WTC11 (cell line): ENCODE measurements at regions of chr1 and their contacts with region 1.

Region 1: DNA sequence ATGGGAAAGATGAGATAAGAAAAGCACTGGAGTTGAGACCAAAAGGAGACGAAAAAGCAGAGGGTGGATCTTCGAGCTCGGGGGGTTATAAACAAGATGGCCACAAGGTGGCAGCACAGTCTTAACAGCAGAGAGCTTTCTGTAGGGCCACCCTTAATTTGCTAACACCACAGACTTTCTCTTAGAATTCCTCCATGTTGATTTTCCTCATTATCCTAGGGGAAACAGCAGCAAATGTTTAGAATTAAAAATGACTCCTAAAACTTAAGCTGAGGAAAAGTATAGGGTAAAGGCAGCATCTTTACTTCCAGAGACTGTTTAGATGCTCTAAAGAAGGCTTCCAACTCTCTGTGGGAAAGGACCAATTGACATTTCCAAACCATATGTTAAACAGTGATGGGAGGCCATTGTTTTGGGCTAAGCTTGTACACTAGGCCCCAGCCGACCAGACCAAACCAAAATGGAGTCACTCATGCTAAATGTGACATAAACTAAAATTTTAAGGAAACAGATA is 2.5 kb upstream of the APOBEC4 start:
- DNase-seq: peak; percentile 85
- ATAC-seq: peak; percentile 92
- H3K4me3 Mint-ChIP-seq: no peak overlapping the region
- H3K27ac Mint-ChIP-seq: no peak overlapping the region
- H3K4me1 Mint-ChIP-seq: peaks cover 11% of the 10 kb centered on the region
- H3K27me3 Mint-ChIP-seq: peaks cover 2% of the 10 kb centered on the region; the same call in 1 of the 2 replicates
- CTCF ChIP-seq: peak; percentile 78

Region 2: GRCh38 chr1:183515018-183515689 is 140.5 kb before region 1 on chr1:
- CTCF ChIA-PET with region 1: no interaction called
- POLR2A ChIA-PET with region 1: no interaction called
- DNase-seq: no peak
- ATAC-seq: no peak
- H3K4me3 Mint-ChIP-seq: no peak overlapping the region
- H3K27ac Mint-ChIP-seq: no peak overlapping the region; the same call in 1 of the 2 replicates
- H3K4me1 Mint-ChIP-seq: peaks cover 24% of the 10 kb centered on the region
- H3K27me3 Mint-ChIP-seq: no peaks in the 10 kb centered on the region
- CTCF ChIP-seq: no peak

Region 3: GRCh38 chr1:183567584-183567983 is 88.0 kb before region 1 on chr1:
- CTCF ChIA-PET with region 1: no interaction called
- POLR2A ChIA-PET with region 1: no interaction called
- DNase-seq: no peak
- ATAC-seq: no peak
- H3K4me3 Mint-ChIP-seq: no peak overlapping the region
- H3K27ac Mint-ChIP-seq: no peak overlapping the region
- H3K4me1 Mint-ChIP-seq: no peaks in the 10 kb centered on the region
- H3K27me3 Mint-ChIP-seq: no peaks in the 10 kb centered on the region
- CTCF ChIP-seq: no peak

Region 4: GRCh38 chr1:183602510-183602909 is 53.1 kb before region 1 on chr1:
- CTCF ChIA-PET with region 1: no interaction called
- POLR2A ChIA-PET with region 1: no interaction called
- DNase-seq: no peak
- ATAC-seq: no peak
- H3K4me3 Mint-ChIP-seq: no peak overlapping the region
- H3K27ac Mint-ChIP-seq: no peak overlapping the region
- H3K4me1 Mint-ChIP-seq: no peaks in the 10 kb centered on the region
- H3K27me3 Mint-ChIP-seq: no peaks in the 10 kb centered on the region; the same call in 1 of the 2 replicates
- CTCF ChIP-seq: no peak

Region 5: DNA sequence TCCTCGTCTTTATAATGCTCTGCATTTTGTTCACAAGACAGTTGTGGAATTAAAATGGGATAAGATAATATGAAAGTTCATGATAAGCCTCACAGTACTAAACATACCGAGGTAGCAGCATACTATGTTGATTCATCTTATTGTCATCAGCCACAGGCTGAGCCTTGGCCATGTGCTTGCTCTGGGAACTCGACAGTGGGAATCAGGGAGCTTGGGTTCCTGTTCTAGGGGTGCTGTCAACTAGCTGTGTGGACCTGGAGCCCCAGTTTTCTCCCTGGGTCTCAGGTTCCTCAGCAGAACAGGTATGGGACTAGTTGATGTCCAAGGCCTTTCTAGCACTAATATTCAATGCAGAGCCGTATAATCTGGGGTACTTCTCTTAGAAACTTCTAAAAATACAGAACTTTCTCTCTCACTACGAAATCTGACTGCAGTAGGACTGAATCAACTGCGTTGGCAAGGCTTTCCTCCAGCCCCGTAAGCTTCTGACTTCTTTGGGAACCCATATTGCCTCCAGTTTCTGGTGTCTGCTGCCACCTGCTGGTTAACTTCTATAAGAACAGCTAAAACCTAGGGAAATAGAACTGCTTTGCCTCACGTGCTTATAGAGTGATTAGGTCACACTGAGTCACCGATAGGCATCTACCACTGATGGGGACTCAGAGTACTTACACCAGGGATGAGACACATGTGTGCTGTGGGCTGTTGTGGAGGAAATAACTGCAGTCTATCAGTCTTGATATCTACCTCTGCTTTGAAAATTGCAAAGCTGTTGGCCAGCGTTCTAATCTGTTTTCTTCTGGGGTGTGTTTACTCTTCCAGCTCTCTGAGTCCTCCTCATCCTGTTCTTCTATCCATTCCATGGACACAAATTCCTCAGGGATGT is 260.2 kb after region 1 on chr1:
- CTCF ChIA-PET with region 1: interaction called, 105 read pairs
- POLR2A ChIA-PET with region 1: no interaction called
- DNase-seq: peak; percentile 65
- ATAC-seq: peak; percentile 94
- H3K4me3 Mint-ChIP-seq: no peak overlapping the region
- H3K27ac Mint-ChIP-seq: no peak overlapping the region
- H3K4me1 Mint-ChIP-seq: peaks cover 11% of the 10 kb centered on the region
- H3K27me3 Mint-ChIP-seq: no peaks in the 10 kb centered on the region
- CTCF ChIP-seq: peak; percentile 66; the same call in 1 of the 2 replicates